ENCODE measurements at regions of chr6 and their contacts with region 1.

Region 1: GRCh38 chr6:100664274-100665040 is 199.7 kb upstream of the SIM1 start:
- H3K4me3 Mint-ChIP-seq: no peak overlapping the region
- H3K27ac Mint-ChIP-seq: no peak overlapping the region
- H3K4me1 Mint-ChIP-seq: no peaks in the 10 kb centered on the region
- H3K27me3 Mint-ChIP-seq: no peaks in the 10 kb centered on the region

Region 2: DNA sequence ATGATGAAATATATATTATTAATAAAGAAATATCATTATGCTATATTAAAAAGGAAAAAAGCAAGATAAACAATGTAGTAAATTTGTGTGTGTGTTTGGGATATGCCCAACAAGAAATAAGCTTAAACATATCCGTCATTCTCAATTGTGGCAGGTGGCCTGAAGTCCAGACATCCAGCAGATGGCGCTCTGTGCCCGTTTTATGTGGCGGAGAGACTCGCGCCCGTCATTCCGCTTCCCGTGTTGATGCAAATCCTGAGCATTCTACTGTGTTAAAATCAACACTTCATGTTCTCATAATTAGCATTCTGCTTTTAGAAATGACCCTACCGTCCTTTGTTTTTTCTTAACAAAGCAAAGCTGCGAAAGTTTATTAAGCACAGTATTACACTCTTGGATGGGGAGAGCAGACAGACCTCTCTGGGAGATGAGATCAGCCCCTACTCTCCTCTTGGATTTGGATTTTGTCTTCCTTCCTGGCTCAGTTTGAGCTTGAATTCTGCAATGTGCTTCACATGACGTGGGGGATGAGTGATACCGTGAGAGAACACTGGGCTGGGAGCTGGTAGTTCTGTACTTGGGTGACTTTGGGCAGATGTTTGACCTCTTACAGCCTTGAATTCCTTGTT is 796.3 kb before region 1 on chr6:
- intact Hi-C with region 1: loop called (anchors 5 kb)
- H3K4me3 Mint-ChIP-seq: no peak overlapping the region
- H3K27ac Mint-ChIP-seq: no peak overlapping the region
- H3K4me1 Mint-ChIP-seq: no peaks in the 10 kb centered on the region
- H3K27me3 Mint-ChIP-seq: peaks cover 22% of the 10 kb centered on the region

Region 3: DNA sequence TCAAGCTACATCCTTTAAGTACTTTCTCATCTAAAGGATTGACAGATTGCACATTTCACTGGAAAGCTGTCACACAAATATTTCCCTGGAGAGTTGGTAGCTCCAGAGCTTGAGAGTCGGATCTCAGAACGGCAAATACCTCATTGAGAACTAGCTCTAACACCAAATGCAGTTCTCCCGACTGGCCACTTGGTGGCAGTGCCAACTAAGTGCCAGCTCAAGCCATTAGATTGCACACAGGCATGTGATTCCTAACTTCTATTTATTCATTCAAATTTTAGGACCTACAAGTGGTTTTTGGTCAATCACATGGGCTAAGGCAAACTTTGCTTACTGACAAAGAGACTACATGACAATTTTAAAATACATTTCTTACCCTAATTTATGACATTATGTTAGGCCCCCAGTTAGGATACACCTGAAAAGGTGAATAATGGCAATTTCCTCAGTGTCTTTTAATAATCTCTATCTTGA is 662.5 kb before region 1 on chr6:
- intact Hi-C with region 1: loop called (anchors 5 kb)
- H3K4me3 Mint-ChIP-seq: no peak overlapping the region
- H3K27ac Mint-ChIP-seq: no peak overlapping the region
- H3K4me1 Mint-ChIP-seq: no peaks in the 10 kb centered on the region
- H3K27me3 Mint-ChIP-seq: peaks cover 9% of the 10 kb centered on the region

Region 4: DNA sequence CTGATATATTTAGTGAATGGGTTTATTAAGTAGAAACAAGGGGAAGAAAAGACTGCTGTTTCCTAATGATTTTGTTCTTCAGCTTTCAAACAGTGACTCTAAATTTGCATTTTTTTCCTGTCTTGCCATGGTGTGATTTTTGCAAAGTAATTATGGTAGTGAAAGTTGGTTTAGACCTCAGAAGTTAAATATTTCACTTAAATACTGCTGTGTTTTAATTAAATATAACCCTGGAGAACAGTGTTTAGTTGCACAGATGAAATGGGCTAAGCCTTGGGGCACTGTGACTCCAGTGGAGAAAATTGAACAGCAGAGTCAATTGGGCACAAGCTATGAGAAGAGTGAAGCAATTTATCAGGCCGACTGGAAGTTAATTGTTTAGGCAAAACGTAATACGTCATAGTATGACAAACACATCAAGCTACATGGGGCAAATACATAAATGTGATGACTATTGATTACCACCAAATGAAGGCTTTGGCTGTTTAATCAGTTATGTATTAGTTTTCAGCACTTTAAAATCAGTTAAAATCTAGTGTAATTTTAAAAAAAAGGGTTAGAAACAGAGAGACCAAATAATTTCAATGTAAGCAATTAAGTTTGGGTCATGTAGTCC is 559.2 kb before region 1 on chr6:
- intact Hi-C with region 1: loop called (anchors 5 kb)
- H3K4me3 Mint-ChIP-seq: no peak overlapping the region
- H3K27ac Mint-ChIP-seq: no peak overlapping the region
- H3K4me1 Mint-ChIP-seq: no peaks in the 10 kb centered on the region
- H3K27me3 Mint-ChIP-seq: peaks cover 3% of the 10 kb centered on the region

Region 5: DNA sequence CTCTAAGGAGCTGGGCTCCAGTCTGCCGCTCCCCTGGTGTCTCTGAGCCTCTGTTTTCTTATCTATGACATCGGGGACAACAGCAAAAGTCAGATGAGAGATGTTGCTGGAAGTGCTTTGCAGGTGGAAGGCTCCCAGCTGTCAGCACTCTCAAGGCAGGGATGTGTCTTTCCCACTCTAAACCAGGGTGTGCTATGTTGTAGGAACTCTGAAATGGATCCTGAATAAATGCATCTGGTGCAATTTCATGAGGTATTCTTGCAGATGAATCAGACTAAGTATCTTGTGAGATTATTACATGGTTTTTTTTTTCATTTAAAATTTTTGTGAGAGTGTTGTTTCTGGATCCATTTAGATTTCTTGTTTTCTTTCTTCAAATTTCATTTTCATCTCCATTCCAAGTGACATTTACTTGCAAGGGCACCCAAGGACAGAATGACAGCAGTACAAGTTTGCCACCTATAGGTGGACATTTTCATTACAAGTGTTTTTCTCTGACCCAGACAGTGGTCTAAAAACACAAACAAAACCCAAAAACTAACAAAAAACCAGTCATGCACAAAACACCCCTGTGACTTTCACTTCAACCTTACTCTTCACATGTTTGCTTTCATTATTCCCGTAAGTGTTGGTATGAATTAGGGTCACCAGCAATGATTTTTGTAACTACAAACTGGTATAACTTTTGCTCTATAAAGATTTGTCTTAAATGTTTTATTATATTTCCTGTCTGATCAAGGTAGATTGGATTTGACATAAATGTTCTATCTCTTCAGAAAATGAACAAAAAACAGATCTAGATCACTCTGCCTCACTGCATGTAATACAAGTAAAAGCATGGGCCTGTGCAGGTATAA is 185.1 kb before region 1 on chr6:
- intact Hi-C with region 1: loop called (anchors 5 kb)
- H3K4me3 Mint-ChIP-seq: no peak overlapping the region
- H3K27ac Mint-ChIP-seq: no peak overlapping the region
- H3K4me1 Mint-ChIP-seq: no peaks in the 10 kb centered on the region
- H3K27me3 Mint-ChIP-seq: peaks cover 27% of the 10 kb centered on the region

Measured in dendritic cell treated with granulocyte-macrophage colony-stimulating factor and Interleukin-4, amounts not matched to agents 40 ng/mL and 50 ng/mL, for 4 days (primary cell).